ENCODE measurements at regions of chr1 and their contacts with region 1.

Region 1: DNA sequence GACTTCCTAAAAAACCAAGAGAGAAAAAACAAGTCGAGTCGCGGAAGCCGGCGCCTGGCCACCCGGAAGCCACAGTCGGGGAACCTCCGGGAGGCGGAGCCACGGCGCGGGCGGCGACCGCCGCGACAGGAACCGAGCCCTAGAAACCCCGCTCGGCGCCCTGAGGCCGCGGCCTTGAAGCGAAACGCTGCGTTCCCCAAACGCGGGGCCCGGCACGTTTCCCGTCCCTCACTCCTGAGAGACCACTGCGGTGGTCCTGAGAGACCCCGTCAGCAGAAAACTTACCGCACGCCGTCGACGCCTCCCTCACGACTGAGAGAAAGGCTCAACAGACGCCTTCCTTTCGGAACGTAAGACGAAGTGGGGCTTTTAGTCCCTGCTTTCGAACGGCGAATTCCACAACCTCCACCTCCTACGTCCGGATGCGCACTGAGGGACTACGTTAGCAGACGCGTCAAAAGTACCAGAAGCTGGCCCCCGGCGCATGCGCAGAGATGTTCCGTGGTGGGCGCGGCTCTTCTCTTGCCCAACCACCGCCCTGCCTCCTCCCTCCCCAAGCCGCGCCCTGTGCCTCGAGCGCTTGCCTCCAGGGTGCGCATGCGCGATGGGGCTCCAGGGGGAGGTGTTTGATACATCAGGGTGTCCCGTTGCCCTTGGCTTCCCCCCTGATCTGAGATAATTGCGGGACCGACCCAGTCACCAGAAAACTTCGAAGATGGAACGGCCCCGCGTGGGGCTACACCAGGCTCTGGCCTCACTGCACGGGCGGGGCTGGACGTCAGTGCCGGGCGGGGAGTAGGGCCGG is at the start of gene RSRP1:
- DNase-seq: peak; percentile 95
- ATAC-seq: peak; percentile 93
- H3K4me3 ChIP-seq: peak within 1 kb of the TSS; percentile 75
- H3K27ac ChIP-seq: peak within 1 kb of the TSS; percentile 93
- H3K4me1 ChIP-seq: no peaks in the 10 kb centered on the region
- H3K27me3 ChIP-seq: no peaks in the 10 kb centered on the region
- CTCF ChIP-seq: no peak
- POLR2A ChIP-seq: peak; percentile 100
- RAD21 ChIP-seq: no peak
- total RNA-seq, gene RSRP1: 71.0 and 73.9 TPM in 2 replicates

Region 2: GRCh38 chr1:25232027-25232865 is 15.0 kb before region 1 on chr1 and contains the start of gene SYF2:
- CTCF ChIA-PET with region 1: no interaction called
- POLR2A ChIA-PET with region 1: interaction called, 12 read pairs
- dilution Hi-C with region 1: no loop called
- in situ Hi-C with region 1: no loop called
- intact Hi-C with region 1: no loop called
- DNase-seq: peak; percentile 91
- ATAC-seq: peak; percentile 86
- H3K4me3 ChIP-seq: peak within 1 kb of the TSS; percentile 76
- H3K27ac ChIP-seq: peak within 1 kb of the TSS; percentile 89
- H3K4me1 ChIP-seq: peaks cover 2% of the 10 kb centered on the region
- H3K27me3 ChIP-seq: no peaks in the 10 kb centered on the region
- CTCF ChIP-seq: no peak
- POLR2A ChIP-seq: peak; percentile 78; the same call in 1 of the 2 replicates
- RAD21 ChIP-seq: no peak
- total RNA-seq, gene SYF2: 8.6 and 22.2 TPM in 2 replicates

Region 3: DNA sequence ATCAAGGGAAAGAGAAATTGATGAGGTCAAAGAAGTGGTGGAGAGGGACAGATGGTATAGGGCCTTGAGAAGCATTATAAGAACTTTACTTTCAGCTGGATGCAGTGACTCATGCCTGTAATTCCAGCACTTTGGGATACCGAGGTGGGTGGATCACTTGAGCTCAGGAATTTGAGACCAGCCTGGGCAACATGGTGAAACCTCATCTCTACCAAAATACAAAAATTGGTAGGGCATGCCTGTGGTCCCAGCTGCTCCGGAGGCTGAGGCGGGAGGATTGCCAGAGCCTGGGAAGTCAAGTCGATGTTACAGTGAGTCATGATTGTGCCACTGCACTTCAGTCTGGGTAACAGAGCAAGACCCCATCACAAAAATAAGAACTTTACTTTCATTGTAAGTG is 96.6 kb after region 1 on chr1:
- CTCF ChIA-PET with region 1: no interaction called
- POLR2A ChIA-PET with region 1: no interaction called
- dilution Hi-C with region 1: no loop called
- in situ Hi-C with region 1: no loop called
- intact Hi-C with region 1: loop called (anchors 5 kb)
- DNase-seq: peak; percentile 89
- ATAC-seq: peak; percentile 88
- H3K4me3 ChIP-seq: no peak overlapping the region
- H3K27ac ChIP-seq: peak overlapping the region; percentile 27; the same call in 1 of the 2 replicates
- H3K4me1 ChIP-seq: peaks cover 4% of the 10 kb centered on the region
- H3K27me3 ChIP-seq: no peaks in the 10 kb centered on the region
- CTCF ChIP-seq: no peak
- POLR2A ChIP-seq: no peak
- RAD21 ChIP-seq: no peak